Activated CD8-positive, alpha-beta T cell treated with anti-CD3 and anti-CD28 coated beads, Interleukin-2, amount 10 ng/mL, durations not matched to agents 7 days and 5 days (primary cell): ENCODE measurements at regions of chr1 and their contacts with region 1.

Region 1: GRCh38 chr1:112798292-112798691 is 83.2 kb upstream of the PPM1J start:
- DNase-seq: no peak
- ATAC-seq: no peak
- H3K4me3 Mint-ChIP-seq: no peak overlapping the region
- H3K27ac Mint-ChIP-seq: no peak overlapping the region
- H3K4me1 Mint-ChIP-seq: no peaks in the 10 kb centered on the region
- H3K27me3 Mint-ChIP-seq: no peaks in the 10 kb centered on the region

Region 2: GRCh38 chr1:112809253-112809684 is 11.0 kb after region 1 on chr1:
- CTCF ChIA-PET with region 1: interaction called, 14 read pairs
- POLR2A ChIA-PET with region 1: no interaction called
- DNase-seq: peak; percentile 76
- ATAC-seq: peak; percentile 94
- H3K4me3 Mint-ChIP-seq: no peak overlapping the region
- H3K27ac Mint-ChIP-seq: no peak overlapping the region
- H3K4me1 Mint-ChIP-seq: no peaks in the 10 kb centered on the region
- H3K27me3 Mint-ChIP-seq: peaks cover 18% of the 10 kb centered on the region